Right ventricle myocardium inferior (tissue), 1 donor: ENCODE measurements at regions of chr17 and their contacts with region 1.

Region 1: GRCh38 chr17:1673041-1673785 is 11.5 kb downstream of the PRPF8 start:
- DNase-seq: no peak
- ATAC-seq: no peak

Region 2: DNA sequence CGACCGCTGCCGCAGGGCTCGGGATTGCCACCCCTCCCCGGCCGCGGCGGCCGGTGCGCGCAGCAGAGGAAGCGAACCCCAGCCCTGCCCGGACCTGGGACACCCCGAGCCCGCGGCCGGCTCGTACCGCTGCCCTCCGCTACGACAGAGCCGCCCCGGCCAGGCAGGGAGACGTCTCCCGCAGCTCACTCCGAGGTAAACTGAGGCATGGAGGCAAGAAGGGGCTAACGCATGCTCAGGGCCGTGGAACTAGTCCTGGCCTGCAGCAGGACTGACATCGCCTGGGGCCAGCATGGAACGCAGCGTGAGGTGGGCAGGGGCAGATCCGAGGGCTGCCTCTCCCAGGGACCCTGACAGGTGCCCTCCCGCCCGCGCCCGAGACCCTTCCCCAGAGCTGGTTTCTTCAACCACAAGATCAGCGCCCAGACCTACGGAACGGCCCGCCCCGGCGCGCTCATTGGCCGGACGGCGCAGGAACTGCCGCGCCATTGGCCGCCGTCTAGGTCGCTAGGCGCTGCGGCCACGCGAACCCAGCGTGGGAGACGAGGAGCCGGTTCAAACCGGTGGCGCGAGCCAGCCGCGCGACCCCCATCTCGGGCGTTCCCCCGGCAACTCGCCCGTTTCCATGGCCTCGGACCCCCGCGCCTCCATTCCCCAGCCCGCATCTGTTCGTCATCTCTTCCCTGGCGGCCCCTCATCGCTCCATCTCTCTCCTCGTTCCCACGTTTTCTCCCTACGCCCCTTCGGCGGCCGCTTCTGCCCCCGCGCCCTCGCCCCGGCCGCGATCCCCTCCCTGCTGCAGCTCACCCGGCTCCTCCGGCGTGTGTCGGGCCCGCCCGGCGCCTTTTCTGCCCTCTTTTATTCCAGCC is 45.0 kb before region 1 on chr17 and contains the start of gene SLC43A2:
- intact Hi-C with region 1: no loop called
- DNase-seq: peak; percentile 93
- ATAC-seq: peak; percentile 89
- total RNA-seq, gene SLC43A2: 5.5 TPM

Region 3: DNA sequence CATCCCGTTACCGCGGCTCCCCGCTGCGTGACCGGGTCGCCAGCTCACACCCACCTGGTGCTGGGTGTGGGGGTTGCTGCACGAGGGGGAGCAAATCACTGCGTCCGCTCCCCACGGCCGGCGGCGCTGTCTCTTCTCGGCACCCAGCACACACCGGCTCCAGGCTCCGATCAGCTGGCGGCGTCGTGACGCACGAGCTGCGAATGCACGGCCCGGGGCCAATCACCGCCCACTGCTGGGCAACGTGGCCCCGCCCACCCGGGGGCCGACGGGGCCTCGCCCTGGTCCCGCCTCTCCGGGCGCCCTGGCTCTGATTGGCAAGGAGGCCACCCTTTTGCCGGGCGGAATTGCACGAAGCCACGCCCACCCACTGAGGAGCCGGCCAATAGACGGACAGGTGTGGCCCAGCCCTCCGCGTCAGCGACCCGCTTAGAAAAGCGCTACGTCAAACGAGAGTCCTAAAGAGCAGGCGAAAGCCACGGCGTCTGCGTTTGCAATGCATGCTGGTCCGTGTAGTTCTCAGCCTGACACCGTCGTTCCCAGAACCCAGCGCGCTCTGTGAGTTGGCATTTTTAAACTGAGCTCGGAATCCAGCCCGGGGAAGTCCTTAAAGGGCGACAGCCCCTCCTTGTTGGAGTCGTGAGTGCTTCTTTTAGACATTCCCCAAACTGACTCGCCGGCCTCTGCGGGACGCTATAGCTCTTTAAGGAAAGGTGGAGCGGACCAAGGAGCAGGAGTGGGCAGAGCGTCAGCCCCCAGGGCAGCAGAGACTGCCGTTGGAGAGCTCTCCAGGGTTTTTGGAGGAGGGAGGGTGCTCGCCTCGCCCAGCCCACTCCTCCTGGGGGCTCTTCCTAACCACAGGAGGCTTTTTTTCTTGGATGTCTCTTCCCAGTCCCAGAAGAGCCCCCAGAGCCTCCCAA is 43.1 kb after region 1 on chr17:
- intact Hi-C with region 1: loop called (anchors 1 kb)
- DNase-seq: peak; percentile 100
- ATAC-seq: peak; percentile 80